SK-N-SH (cell line): ENCODE measurements at regions of chr7 and their contacts with region 1.

Region 1: GRCh38 chr7:31058122-31058521 is 6.0 kb downstream of the ADCYAP1R1 start:
- DNase-seq: no peak
- H3K4me3 ChIP-seq: no peak overlapping the region
- H3K27ac ChIP-seq: no peak overlapping the region
- H3K4me1 ChIP-seq: peaks cover 0 to 28% of the 10 kb centered on the region in 2 experiments; a peak in 1 of 4 replicates
- H3K27me3 ChIP-seq: peaks cover 18% of the 10 kb centered on the region
- CTCF ChIP-seq: no peak
- EP300 ChIP-seq: no peak
- RAD21 ChIP-seq: no peak

Region 2: DNA sequence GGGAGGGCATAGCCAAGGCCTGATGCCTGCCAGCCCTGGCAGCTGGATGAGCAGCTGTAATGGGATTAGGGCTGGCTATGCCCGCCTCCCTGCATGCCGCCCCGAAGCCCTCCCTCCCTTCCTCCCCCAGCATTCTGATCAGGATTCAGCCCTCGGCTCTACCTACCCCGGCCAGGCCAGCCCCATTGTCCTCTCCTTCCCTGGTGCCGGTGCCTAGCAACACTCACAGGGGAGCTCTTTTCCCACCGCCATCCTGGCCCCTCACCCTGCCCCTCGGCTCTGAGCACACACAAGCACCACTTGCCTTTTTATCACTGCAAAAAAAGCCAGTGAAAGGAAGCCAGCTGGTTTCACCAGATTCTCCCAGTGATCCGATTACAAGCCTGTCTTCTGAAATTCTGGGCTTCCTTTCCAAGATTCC is 15.1 kb before region 1 on chr7:
- CTCF ChIA-PET with region 1: interaction called, 29 read pairs
- POLR2A ChIA-PET with region 1: no interaction called
- DNase-seq: peak; percentile 85
- H3K4me3 ChIP-seq: no peak overlapping the region
- H3K27ac ChIP-seq: peak overlapping the region in 1 of 2 experiments; percentile 87; a peak in 2 of 4 replicates
- H3K4me1 ChIP-seq: peaks cover 0 to 36% of the 10 kb centered on the region in 2 experiments; a peak in 2 of 4 replicates
- H3K27me3 ChIP-seq: peaks cover 29% of the 10 kb centered on the region
- CTCF ChIP-seq: no peak
- EP300 ChIP-seq: no peak; a peak in 1 of 4 replicates
- RAD21 ChIP-seq: no peak; the same call in 1 of the 2 replicates

Region 3: GRCh38 chr7:31074120-31074383 is 15.9 kb after region 1 on chr7:
- CTCF ChIA-PET with region 1: interaction called, 36 read pairs
- POLR2A ChIA-PET with region 1: interaction called, 4 read pairs
- DNase-seq: no peak
- H3K4me3 ChIP-seq: no peak overlapping the region
- H3K27ac ChIP-seq: no peak overlapping the region
- H3K4me1 ChIP-seq: no peaks in the 10 kb centered on the region
- H3K27me3 ChIP-seq: peaks cover 23% of the 10 kb centered on the region; the same call in 1 of the 2 replicates
- CTCF ChIP-seq: no peak
- EP300 ChIP-seq: no peak
- RAD21 ChIP-seq: no peak